Body of pancreas (tissue), 4 donors: ENCODE measurements at regions of chr20 and their contacts with region 1.

Region 1: DNA sequence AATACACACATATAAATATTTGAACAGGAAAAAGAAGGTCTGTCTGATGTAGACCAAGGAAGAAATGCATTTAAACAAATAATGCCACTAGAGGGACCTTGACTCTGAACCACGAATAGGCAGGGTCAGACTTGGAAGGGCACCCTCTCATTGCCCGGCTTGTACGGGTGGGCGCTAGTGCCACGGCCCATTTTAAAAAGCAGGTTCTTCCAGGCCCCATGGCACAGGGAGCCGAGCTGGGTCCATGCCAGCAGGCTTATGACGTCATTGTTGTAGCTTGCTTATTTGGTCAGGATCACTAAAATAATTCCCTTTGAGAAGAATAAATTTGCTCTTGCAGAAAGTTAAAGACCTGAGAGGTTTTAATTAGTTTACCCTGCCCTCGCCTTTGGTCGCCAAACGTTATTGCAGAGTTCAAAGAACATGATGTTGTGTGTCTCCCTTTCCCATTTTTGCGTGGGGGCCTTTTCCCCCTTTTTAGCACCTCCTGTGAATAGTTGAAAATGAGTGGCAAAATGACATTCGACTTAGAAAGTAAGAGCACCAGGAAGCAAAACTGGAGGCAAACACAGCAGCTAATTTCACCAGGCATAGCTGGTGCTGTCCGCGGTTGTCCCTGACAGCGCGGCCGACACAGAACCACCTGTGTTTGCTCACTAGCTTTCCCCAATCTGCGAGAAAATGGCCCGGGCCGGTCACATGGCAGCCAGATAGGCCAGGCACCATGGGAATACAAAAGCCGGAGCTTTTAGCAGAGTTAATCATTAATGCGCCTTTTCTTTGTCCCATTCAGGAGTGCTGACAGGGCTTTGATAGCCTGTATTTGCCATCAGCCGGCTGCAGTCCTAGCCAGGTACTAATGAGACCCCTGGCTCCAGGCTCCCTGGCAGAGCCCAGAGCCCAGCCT is 93.8 kb downstream of the FOXA2 start:
- DNase-seq: peak; percentile 97 to 98 (median 98)
- ATAC-seq: peak; percentile 97
- H3K4me3 ChIP-seq: no peak overlapping the region
- H3K27ac ChIP-seq: peak overlapping the region; percentile 89 to 97 (median 95)
- H3K4me1 ChIP-seq: peaks cover 43% of the 10 kb centered on the region
- H3K27me3 ChIP-seq: no peaks in the 10 kb centered on the region
- CTCF ChIP-seq: peak in 6 of 7 experiments; percentile 14 to 62 (median 55)
- POLR2A ChIP-seq: peak; percentile 32 to 76 (median 75)

Region 2: DNA sequence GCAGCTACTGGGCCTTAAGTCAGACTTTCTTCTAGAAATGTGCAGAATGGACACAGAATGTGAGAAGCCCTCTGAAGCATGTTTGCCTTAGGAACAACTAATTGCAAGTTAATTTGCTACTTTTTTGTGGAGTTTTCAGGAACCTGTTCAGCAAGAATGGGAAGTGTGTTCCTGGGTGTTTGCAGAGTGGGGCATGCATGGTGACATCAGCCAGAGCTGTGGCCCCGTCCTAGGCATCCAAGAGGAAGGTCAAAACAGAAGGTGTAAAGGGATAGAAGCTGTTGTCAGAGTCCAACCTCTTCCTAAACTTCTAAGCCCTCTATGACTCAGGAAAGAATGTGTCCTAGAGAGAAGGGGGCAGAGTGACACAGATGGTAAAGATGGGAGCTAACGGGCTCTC is 194.5 kb before region 1 on chr20:
- intact Hi-C with region 1: no loop called
- DNase-seq: no peak
- ATAC-seq: no peak
- H3K4me3 ChIP-seq: no peak overlapping the region
- H3K27ac ChIP-seq: no peak overlapping the region
- H3K4me1 ChIP-seq: no peaks in the 10 kb centered on the region
- H3K27me3 ChIP-seq: no peaks in the 10 kb centered on the region
- CTCF ChIP-seq: no peak
- POLR2A ChIP-seq: no peak

Region 3: GRCh38 chr20:22567944-22568871 is 77.7 kb after region 1 on chr20:
- intact Hi-C with region 1: loop called (anchors 10 kb)
- DNase-seq: peak; percentile 69 to 83 (median 81)
- ATAC-seq: peak; percentile 72
- H3K4me3 ChIP-seq: peak overlapping the region; percentile 2 to 17
- H3K27ac ChIP-seq: peak overlapping the region; percentile 68 to 99 (median 98)
- H3K4me1 ChIP-seq: peaks cover 74% of the 10 kb centered on the region
- H3K27me3 ChIP-seq: no peaks in the 10 kb centered on the region
- CTCF ChIP-seq: no peak
- POLR2A ChIP-seq: peak; percentile 28 to 74 (median 63)

Region 4: GRCh38 chr20:23034721-23035671 is 544.5 kb after region 1 on chr20 and contains the start of gene SSTR4:
- intact Hi-C with region 1: no loop called
- DNase-seq: no peak
- ATAC-seq: no peak
- H3K4me3 ChIP-seq: no peak within 1 kb of the TSS
- H3K27ac ChIP-seq: no peak within 1 kb of the TSS
- H3K4me1 ChIP-seq: no peaks in the 10 kb centered on the region
- H3K27me3 ChIP-seq: peaks cover 0 to 5% of the 10 kb centered on the region in 2 donors
- CTCF ChIP-seq: no peak
- POLR2A ChIP-seq: no peak
- total RNA-seq, gene SSTR4: not detected